ENCODE measurements at regions of chr2 and their contacts with region 1.

Region 1: GRCh38 chr2:171922230-171923022 is at the start of gene HAT1:
- DNase-seq: peak; percentile 92 to 98 (median 97)
- ATAC-seq: peak; percentile 99
- H3K4me3 ChIP-seq: peak within 1 kb of the TSS; percentile 75
- H3K4me3 Mint-ChIP-seq: peak within 1 kb of the TSS; percentile 90 to 100 (median 99)
- H3K27ac ChIP-seq: peak within 1 kb of the TSS; percentile 93
- H3K27ac Mint-ChIP-seq: peak within 1 kb of the TSS; percentile 96 to 100 (median 99)
- H3K4me1 ChIP-seq: peaks cover 13 to 17% of the 10 kb centered on the region in 2 donors
- H3K4me1 Mint-ChIP-seq: peaks cover 20 to 50% (median 42%) of the 10 kb centered on the region in 7 donors
- H3K27me3 ChIP-seq: no peaks in the 10 kb centered on the region
- H3K27me3 Mint-ChIP-seq: no peaks in the 10 kb centered on the region
- total RNA-seq, gene HAT1: 22.1 to 55.4 (median 26.4) TPM

Region 2: GRCh38 chr2:171347591-171348032 is 574.8 kb before region 1 on chr2:
- CTCF ChIA-PET with region 1: no interaction called
- POLR2A ChIA-PET with region 1: no interaction called
- intact Hi-C with region 1: no loop called
- DNase-seq: no peak
- ATAC-seq: no peak
- H3K4me3 ChIP-seq: no peak overlapping the region
- H3K4me3 Mint-ChIP-seq: no peak overlapping the region
- H3K27ac ChIP-seq: no peak overlapping the region
- H3K27ac Mint-ChIP-seq: no peak overlapping the region
- H3K4me1 ChIP-seq: no peaks in the 10 kb centered on the region
- H3K4me1 Mint-ChIP-seq: peaks cover 0 to 21% (median under 1%) of the 10 kb centered on the region in 7 donors
- H3K27me3 ChIP-seq: no peaks in the 10 kb centered on the region
- H3K27me3 Mint-ChIP-seq: no peaks in the 10 kb centered on the region

Region 3: GRCh38 chr2:171882089-171882769 is 40.2 kb before region 1 on chr2:
- CTCF ChIA-PET with region 1: no interaction called
- POLR2A ChIA-PET with region 1: no interaction called
- intact Hi-C with region 1: loop called in 1 of 2 experiments (anchors 5 kb)
- DNase-seq: no peak
- ATAC-seq: no peak
- H3K4me3 ChIP-seq: no peak overlapping the region
- H3K4me3 Mint-ChIP-seq: peak overlapping the region in 1 of 10 donors; percentile 38
- H3K27ac ChIP-seq: no peak overlapping the region
- H3K27ac Mint-ChIP-seq: peak overlapping the region in 2 of 9 donors; percentile 1 to 38
- H3K4me1 ChIP-seq: no peaks in the 10 kb centered on the region
- H3K4me1 Mint-ChIP-seq: peaks cover 9 to 44% (median 33%) of the 10 kb centered on the region in 7 donors
- H3K27me3 ChIP-seq: no peaks in the 10 kb centered on the region
- H3K27me3 Mint-ChIP-seq: no peaks in the 10 kb centered on the region

Region 4: DNA sequence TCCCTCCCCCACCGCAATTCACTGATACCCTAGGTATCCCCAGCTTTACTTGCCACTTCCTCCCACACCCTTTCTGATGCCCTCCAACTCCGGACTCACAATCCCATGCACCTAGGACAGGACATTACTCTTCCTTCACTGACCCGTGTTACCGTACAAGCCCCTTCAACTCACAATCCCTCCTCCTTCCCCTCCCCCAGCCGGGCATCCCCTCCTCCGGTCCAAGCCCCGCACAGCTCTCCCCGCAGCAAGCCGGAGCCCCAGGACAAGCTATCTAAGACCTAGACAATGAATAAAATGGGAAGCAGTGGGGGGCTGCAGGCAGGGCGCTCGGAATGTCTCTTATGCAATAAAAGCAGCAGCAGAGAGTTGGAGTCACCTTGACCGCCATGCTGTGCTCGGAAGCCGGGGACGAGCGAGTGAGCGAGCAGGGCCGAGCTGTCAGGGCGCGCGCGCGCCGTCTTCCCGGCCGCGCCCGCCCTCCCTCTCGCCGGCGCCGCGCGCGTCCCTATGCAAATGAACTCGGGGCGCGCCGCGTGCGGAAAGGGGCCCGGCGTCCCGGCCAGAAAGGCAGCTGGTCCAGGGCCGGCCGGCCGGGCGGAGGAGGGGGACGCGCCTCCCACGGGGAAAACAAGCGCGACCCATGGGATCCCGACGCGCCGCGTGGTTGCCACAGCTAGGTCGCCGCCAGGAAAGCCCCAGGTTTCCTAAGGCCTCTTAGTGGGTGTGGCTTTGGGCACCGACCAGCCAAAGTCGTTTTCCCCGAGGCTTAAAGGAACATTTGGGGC is 28.4 kb before region 1 on chr2 and contains the start of gene SLC25A12:
- CTCF ChIA-PET with region 1: no interaction called
- POLR2A ChIA-PET with region 1: interaction called, 20 read pairs
- intact Hi-C with region 1: loop called (anchors 1 kb)
- DNase-seq: peak; percentile 53 to 79 (median 65)
- ATAC-seq: peak; percentile 96
- H3K4me3 ChIP-seq: peak within 1 kb of the TSS; percentile 93
- H3K4me3 Mint-ChIP-seq: peak within 1 kb of the TSS; percentile 93 to 98 (median 96)
- H3K27ac ChIP-seq: peak within 1 kb of the TSS; percentile 83
- H3K27ac Mint-ChIP-seq: peak within 1 kb of the TSS; percentile 66 to 94 (median 89)
- H3K4me1 ChIP-seq: peaks cover 11 to 17% of the 10 kb centered on the region in 2 donors
- H3K4me1 Mint-ChIP-seq: peaks cover 31 to 61% (median 52%) of the 10 kb centered on the region in 7 donors
- H3K27me3 ChIP-seq: no peaks in the 10 kb centered on the region
- H3K27me3 Mint-ChIP-seq: peaks cover 0 to 6% (median 0%) of the 10 kb centered on the region in 5 donors
- total RNA-seq, gene SLC25A12: 12.7 to 33.6 (median 14.0) TPM

Region 5: GRCh38 chr2:171999604-172000469 is 77.4 kb after region 1 on chr2 and contains the start of gene METAP1D:
- CTCF ChIA-PET with region 1: no interaction called
- POLR2A ChIA-PET with region 1: interaction called, 3 read pairs
- intact Hi-C with region 1: loop called (anchors 1 kb)
- DNase-seq: peak; percentile 74 to 92 (median 82)
- ATAC-seq: peak; percentile 98
- H3K4me3 ChIP-seq: peak within 1 kb of the TSS; percentile 99
- H3K4me3 Mint-ChIP-seq: peak within 1 kb of the TSS; percentile 87 to 99 (median 96)
- H3K27ac ChIP-seq: peak within 1 kb of the TSS; percentile 61
- H3K27ac Mint-ChIP-seq: peak within 1 kb of the TSS; percentile 77 to 97 (median 93)
- H3K4me1 ChIP-seq: peaks cover 0 to 5% of the 10 kb centered on the region in 2 donors
- H3K4me1 Mint-ChIP-seq: peaks cover 5 to 24% (median 22%) of the 10 kb centered on the region in 7 donors
- H3K27me3 ChIP-seq: no peaks in the 10 kb centered on the region
- H3K27me3 Mint-ChIP-seq: peaks cover 6 to 23% (median 9%) of the 10 kb centered on the region in 5 donors
- total RNA-seq, gene METAP1D: 5.3 to 12.2 (median 11.6) TPM

Measured in naive thymus-derived CD4-positive, alpha-beta T cell (primary cell).